ENCODE measurements at regions of chr1 and their contacts with region 1.

Region 1: GRCh38 chr1:38018864-38019343 is 6.4 kb downstream of the UTP11 start:
- DNase-seq: no peak
- H3K4me3 ChIP-seq: no peak overlapping the region
- H3K27ac ChIP-seq: peak overlapping the region in 3 of 4 donors; percentile 84 to 96 (median 95)
- H3K4me1 ChIP-seq: peaks cover 33 to 54% (median 41%) of the 10 kb centered on the region in 4 donors
- H3K27me3 ChIP-seq: no peaks in the 10 kb centered on the region
- CTCF ChIP-seq: peak; percentile 54 to 63 (median 63)
- EP300 ChIP-seq: no peak
- POLR2A ChIP-seq: no peak

Region 2: DNA sequence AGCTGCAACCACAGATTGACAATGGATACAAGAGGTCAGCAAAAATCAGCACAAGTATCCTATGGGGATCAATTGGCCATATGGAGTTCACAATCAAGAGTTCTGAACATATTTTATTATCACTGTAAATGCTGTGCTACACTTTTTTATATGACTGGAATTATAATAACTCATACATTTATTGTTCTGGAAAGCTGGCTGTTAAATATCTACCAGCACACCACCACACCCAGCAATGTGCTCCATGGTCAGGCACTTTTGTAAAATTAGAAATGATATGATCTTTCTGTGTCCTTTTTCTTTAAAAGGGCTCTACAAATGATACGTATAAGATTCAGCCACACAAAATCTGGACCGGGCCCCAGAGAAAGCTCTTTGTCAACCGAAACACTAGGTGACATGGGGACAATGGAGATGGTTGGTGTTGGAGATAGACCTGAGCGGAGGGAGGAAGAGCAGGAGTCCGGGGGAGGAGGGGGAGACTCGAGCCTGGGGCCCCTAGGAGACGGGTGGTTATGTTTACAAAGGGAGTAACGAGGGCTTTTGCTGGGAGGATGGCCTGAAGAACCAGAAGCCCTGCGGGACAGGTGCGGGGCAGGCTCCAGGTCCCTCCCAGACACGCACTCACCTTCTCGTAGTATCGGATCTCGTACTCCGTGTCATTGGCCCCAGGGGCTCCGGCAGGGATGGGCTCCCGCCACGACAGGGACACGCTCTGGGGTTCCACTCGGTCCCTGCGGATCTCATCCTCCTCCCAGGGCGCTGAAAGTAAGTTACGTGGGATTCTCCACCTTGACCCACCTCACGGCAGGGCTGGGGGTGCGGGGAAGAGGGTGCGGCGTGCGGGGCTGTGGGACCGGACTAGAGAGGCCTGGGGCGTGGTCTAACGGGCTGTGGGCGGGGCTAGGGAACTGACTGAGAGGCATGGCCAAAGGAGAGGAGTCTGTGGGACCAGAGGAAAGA is 284.0 kb before region 1 on chr1:
- intact Hi-C with region 1: no loop called
- DNase-seq: no peak
- H3K4me3 ChIP-seq: no peak overlapping the region
- H3K27ac ChIP-seq: no peak overlapping the region
- H3K4me1 ChIP-seq: no peaks in the 10 kb centered on the region
- H3K27me3 ChIP-seq: peaks cover 0 to 79% (median 7%) of the 10 kb centered on the region in 4 donors
- CTCF ChIP-seq: no peak
- EP300 ChIP-seq: no peak
- POLR2A ChIP-seq: no peak

Region 3: GRCh38 chr1:37989361-37989930 is 29.5 kb before region 1 on chr1:
- intact Hi-C with region 1: loop called (anchors 2 kb)
- DNase-seq: no peak
- H3K4me3 ChIP-seq: peak overlapping the region; percentile 68 to 95 (median 82)
- H3K27ac ChIP-seq: peak overlapping the region; percentile 76 to 87 (median 83)
- H3K4me1 ChIP-seq: peaks cover 20 to 33% (median 24%) of the 10 kb centered on the region in 4 donors
- H3K27me3 ChIP-seq: no peaks in the 10 kb centered on the region
- CTCF ChIP-seq: no peak
- EP300 ChIP-seq: no peak
- POLR2A ChIP-seq: no peak

Region 4: GRCh38 chr1:38221006-38221649 is 202.2 kb after region 1 on chr1:
- intact Hi-C with region 1: no loop called
- DNase-seq: no peak
- H3K4me3 ChIP-seq: no peak overlapping the region
- H3K27ac ChIP-seq: no peak overlapping the region
- H3K4me1 ChIP-seq: peaks cover 0 to 3% (median 0%) of the 10 kb centered on the region in 4 donors
- H3K27me3 ChIP-seq: peaks cover 0 to 38% (median 0%) of the 10 kb centered on the region in 4 donors
- CTCF ChIP-seq: no peak
- EP300 ChIP-seq: no peak
- POLR2A ChIP-seq: no peak